ENCODE measurements at regions of chr1 and their contacts with region 1.

Region 1: DNA sequence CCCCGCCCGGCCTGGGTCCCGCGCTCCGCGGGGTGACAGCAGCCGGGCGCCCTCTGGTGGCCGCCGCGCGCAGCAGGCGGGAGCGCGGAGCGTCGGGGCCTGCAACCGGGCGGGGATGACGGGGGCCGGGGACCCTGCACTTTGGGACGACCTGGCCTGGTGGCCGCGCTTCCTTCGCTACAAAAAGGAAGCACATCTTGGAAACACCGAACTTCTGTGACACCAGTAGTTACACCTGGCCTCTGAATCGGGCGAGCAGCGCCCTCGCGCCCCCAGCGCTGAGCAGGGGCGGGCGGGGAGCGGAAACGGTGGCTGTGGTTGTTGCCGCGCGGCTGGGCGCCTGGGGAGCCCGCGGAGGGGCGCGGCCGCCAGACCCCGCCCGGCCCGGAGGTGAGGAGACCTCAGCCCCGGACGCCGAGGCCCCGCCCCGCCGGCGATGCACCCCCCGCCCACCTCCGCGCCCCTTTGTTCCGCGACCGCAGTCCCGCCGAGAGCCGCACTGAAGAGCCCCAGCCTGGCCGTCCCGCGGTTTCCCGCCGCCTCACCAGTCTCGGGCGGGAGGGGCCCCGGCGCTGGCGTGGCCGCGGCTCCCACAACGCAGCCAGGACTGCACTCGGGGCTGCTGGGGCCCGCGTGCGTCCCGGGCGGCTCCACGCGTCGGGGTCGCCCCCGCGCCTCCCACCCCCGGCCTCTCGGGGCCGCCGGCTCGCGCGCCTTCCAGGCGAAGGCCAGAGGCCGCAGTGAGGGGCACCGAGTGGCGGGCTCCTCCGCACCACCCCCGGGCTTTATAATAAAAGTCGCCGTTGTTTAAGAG is 59.3 kb downstream of the H3-3A start:
- DNase-seq: peak; percentile 70
- H3K4me3 Mint-ChIP-seq: peak overlapping the region; percentile 78
- H3K27ac Mint-ChIP-seq: no peak overlapping the region
- H3K4me1 Mint-ChIP-seq: peaks cover 41% of the 10 kb centered on the region
- H3K27me3 Mint-ChIP-seq: peaks cover 5% of the 10 kb centered on the region

Region 2: GRCh38 chr1:226083302-226084101 is 38.3 kb before region 1 on chr1:
- intact Hi-C with region 1: loop called (anchors 1 kb)
- DNase-seq: peak; percentile 91
- H3K4me3 Mint-ChIP-seq: peak overlapping the region; percentile 89
- H3K27ac Mint-ChIP-seq: peak overlapping the region; percentile 79
- H3K4me1 Mint-ChIP-seq: peaks cover 12% of the 10 kb centered on the region
- H3K27me3 Mint-ChIP-seq: peaks cover 15% of the 10 kb centered on the region

Region 3: GRCh38 chr1:226109829-226110248 is 12.0 kb before region 1 on chr1:
- intact Hi-C with region 1: loop called (anchors 1 kb)
- DNase-seq: peak; percentile 75
- H3K4me3 Mint-ChIP-seq: peak overlapping the region; percentile 90
- H3K27ac Mint-ChIP-seq: peak overlapping the region; percentile 88
- H3K4me1 Mint-ChIP-seq: peaks cover 25% of the 10 kb centered on the region
- H3K27me3 Mint-ChIP-seq: peaks cover 9% of the 10 kb centered on the region

Region 4: DNA sequence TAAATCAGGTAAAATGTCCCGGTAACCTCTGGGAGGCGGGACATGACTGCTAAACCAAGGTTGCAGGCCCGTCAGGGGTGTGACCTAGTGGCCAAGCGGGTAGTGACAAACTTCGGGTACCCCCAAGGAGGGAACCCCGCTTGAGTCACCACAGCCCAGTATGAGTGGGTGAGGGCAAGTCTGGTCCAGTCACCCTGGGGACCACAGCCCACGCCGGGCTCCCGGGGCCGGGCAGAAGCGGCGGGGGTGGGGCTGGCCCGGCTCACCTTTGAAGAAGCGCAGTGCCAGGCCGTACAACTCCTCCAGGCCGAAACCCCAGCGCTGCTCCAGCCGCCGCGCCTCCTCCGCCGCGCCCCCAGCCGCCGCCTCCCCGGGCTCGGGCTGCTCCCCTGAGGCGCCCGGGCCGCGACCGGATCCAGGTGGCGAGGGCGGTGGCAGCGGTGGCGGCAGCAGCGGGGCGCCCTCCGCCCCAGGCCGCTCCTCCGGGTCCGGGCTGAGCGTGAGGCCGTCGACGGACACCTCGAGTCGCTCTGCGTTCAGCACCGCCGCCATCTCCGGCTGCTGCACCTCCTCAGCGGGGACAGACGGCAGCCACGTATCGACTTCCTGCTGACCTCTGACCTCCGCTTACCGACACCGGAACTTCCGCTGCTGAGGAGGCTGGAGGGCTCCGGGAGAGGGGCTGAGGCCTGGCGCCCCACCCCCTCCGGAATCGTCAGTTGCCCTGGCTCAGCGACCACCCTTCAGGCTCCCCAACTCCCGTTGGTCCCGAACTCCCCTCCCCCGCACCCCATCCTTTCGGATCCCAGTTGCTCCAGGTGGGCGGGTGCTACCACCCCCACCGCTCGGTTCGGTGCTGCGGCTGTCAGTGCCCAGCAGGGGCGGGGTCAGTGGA is 64.6 kb after region 1 on chr1 and contains the start of gene ACBD3:
- intact Hi-C with region 1: loop called (anchors 1 kb)
- DNase-seq: peak; percentile 84
- H3K4me3 Mint-ChIP-seq: peak within 1 kb of the TSS; percentile 96
- H3K27ac Mint-ChIP-seq: peak within 1 kb of the TSS; percentile 92
- H3K4me1 Mint-ChIP-seq: peaks cover 35% of the 10 kb centered on the region
- H3K27me3 Mint-ChIP-seq: no peaks in the 10 kb centered on the region
- total RNA-seq, gene ACBD3: 23.6 and 26.0 TPM in 2 replicates

Region 5: GRCh38 chr1:226201029-226201593 is 79.3 kb after region 1 on chr1:
- intact Hi-C with region 1: loop called (anchors 1 kb)
- DNase-seq: no peak
- H3K4me3 Mint-ChIP-seq: no peak overlapping the region
- H3K27ac Mint-ChIP-seq: no peak overlapping the region
- H3K4me1 Mint-ChIP-seq: no peaks in the 10 kb centered on the region
- H3K27me3 Mint-ChIP-seq: peaks cover 12% of the 10 kb centered on the region

Region 6: DNA sequence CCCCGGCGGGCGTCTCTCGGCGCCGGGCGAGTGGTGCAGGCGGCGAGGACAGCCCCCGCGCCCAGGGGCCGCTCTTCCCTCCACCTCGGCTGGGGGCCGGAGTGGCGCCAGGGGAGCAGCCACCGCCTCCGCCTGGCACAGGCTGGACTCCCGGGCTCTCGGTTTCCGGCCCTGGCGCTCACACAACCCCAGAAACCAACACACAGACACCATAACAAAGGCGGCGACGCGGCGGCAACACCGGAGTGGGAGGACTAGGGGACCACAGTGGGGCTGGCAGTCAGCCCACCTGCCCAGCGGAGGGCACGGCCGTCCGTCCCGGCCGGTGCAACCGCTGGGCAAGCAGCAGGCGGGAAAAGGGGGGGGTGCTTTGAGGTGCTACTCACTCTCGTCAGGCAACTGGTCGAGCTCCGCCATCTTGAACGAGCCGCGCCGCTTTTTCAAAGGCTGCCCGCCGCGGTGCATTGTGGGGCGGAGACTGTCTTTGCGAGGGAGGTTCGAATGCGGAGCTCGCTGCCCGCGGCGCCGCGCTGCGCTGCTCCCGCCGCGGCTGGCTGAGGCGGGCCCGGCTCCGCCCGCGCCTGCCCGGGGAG is 187.0 kb after region 1 on chr1 and contains the start of gene LIN9:
- intact Hi-C with region 1: loop called (anchors 1 kb)
- DNase-seq: peak; percentile 90
- H3K4me3 Mint-ChIP-seq: peak within 1 kb of the TSS; percentile 95
- H3K27ac Mint-ChIP-seq: peak within 1 kb of the TSS; percentile 86
- H3K4me1 Mint-ChIP-seq: peaks cover 50% of the 10 kb centered on the region
- H3K27me3 Mint-ChIP-seq: peaks cover 16% of the 10 kb centered on the region
- total RNA-seq, gene LIN9: 11.7 and 12.1 TPM in 2 replicates

Region 7: DNA sequence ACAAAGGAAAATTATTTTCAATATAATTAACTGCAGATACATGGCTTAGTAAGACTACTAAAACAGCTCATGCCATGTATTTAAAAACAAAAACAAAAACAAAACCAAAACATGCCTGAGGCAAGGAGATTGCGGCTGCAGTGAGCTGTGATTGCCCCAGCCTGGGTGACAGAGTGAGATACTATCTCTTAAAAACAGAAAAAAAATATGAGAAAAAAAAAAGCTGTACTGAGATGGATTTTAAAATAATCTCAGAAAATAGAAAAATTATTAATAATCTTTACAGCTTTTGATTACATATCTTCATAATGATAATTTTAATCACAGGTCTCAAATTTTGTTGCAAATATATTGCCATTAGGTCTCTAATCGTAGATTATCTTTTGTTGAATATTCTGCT is 211.2 kb after region 1 on chr1:
- intact Hi-C with region 1: loop called (anchors 1 kb)
- DNase-seq: peak; percentile 11
- H3K4me3 Mint-ChIP-seq: peak overlapping the region; percentile 8
- H3K27ac Mint-ChIP-seq: no peak overlapping the region
- H3K4me1 Mint-ChIP-seq: peaks cover 7% of the 10 kb centered on the region
- H3K27me3 Mint-ChIP-seq: peaks cover 2% of the 10 kb centered on the region

Measured in activated T-helper 1 cell treated with anti-CD3 and anti-CD28 coated beads, Interleukin-12 subunit alpha, Interleukin-12 subunit beta, Interleukin-2, Interleukin-4 antibody, amounts not matched to agents 30 ng/mL and 10 ng/mL and 1 ng/mL, durations not matched to agents 14 hours and 24 hours and 36 hours (primary cell).